Mammary epithelial cell (primary cell): ENCODE measurements at regions of chr17 and their contacts with region 1.

Region 1: DNA sequence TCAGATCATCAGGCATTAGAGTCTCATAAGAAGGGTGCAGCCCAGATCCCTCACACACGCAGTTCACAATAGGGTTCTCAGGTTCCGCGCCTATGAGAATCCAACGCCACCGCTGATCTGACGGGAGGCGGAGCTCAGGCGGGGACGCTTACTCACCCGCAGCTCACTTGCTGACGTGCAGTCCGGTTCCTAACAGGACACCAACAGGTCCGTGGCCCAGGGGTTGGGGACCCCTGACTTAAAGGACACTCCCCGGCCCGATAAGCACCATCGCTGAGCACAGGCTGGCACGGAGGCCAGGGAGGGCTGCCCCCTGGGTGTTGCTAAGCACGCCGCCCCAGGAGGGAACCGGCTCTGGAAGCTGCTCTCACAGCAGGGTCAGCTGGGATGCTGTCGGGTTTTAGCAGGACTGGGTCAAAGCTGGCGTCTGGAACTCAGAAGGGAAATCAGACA is 30.1 kb upstream of the BAHCC1 start:
- DNase-seq: peak; percentile 82
- H3K4me3 ChIP-seq: peak overlapping the region in 2 of 3 experiments; percentile 13 to 14
- H3K27ac ChIP-seq: peak overlapping the region; percentile 48
- H3K4me1 ChIP-seq: peaks cover 25% of the 10 kb centered on the region
- H3K27me3 ChIP-seq: peaks cover 5% of the 10 kb centered on the region
- CTCF ChIP-seq: no peak

Region 2: DNA sequence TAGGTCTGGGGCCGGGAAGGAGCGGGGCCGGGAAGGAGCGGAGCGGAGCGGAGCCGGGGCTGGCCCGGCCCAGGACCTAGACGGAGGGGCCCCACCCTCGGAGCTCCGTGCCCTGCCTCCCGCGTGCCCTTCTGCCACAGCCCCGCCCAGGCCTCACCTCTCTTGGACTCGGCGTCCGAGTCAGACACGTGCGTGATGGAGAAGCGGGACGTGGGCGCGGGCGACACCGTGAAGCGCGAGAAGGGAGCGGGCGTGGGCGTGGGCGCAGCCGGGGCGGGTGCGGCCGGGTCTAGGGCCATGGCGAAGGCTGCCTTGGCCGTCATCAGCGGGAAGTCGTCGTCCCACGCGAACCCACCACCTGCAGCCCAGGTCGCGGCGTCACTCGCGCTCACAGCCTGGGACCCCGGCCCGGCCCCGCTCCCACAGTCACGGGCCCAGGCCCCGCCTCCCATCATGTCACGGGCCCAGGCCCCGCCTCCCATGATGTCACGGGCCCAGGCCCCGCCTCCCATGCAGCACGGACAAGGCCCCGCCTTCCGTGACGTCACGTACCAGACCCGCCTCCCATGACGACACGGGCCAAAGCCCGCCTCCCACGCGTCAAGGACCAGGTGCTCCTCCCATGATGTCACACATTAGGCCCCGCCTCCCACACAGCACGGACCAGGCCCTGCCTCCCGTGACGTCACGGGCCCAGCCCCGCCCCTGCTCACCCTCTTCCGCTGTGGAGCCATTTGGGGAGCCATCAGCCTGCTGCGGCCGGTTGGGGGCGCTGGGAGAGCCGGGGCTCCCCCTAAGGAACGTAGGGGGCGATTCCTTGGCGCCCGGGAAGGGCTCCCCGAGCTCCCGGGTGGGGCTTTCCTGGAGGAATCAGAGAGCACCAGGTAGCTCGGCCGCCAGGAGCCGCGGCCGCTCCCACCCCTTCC is 245.7 kb before region 1 on chr17:
- CTCF ChIA-PET with region 1: no interaction called
- dilution Hi-C with region 1: no loop called
- in situ Hi-C with region 1: no loop called
- intact Hi-C with region 1: no loop called
- DNase-seq: peak; percentile 66
- H3K4me3 ChIP-seq: peak overlapping the region; percentile 41 to 72 (median 69)
- H3K27ac ChIP-seq: peak overlapping the region; percentile 23
- H3K4me1 ChIP-seq: peaks cover 16% of the 10 kb centered on the region
- H3K27me3 ChIP-seq: no peaks in the 10 kb centered on the region
- CTCF ChIP-seq: no peak

Region 3: DNA sequence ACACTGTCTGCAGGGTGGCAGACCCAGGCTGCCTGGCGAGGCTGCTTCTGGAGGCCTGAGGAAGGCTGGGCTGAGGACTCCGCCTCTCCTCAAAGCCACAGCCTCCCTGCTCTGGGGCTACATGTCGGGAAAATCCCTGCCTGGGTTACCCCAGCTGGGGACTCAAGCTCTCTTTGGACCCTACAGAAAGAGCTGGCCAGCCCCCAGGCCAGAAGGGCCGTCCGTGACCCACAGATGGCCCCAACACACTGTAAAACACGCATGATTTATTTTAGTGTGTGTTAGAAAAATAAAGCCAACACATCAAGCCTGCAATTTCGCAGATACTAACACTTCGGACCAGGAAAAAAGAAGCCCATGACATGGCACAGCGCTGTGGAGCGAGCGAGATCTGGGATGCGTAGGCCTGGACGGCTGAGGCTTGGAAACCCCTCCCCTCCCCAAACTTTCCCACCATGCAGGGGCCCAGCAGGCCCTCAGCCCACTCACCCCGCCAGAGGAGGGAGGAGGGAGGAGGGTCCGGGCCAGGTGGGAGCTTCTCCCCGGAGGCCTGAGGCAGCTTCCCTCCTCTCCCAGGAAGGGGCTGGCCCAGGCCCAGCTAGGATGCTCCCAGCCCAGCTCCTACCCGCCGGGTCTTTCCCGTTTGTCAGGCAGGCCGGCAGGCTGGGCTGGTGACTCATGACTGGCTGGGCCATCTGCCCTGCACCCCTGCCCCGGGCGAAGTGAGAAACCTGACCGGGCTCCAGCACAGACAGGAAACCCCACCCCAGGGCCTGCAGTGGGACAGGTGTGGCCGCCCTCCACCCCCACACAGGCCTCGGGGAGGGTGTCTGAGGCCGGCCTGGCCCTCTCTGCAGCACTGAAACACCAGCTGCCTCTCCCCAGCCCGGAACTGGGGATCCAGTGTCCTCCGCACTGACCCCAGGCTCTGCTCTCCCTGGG is 35.9 kb before region 1 on chr17:
- CTCF ChIA-PET with region 1: no interaction called
- dilution Hi-C with region 1: no loop called
- in situ Hi-C with region 1: no loop called
- intact Hi-C with region 1: loop called (anchors 1 kb)
- DNase-seq: peak; percentile 98
- H3K4me3 ChIP-seq: peak overlapping the region in 2 of 3 experiments; percentile 28 to 30
- H3K27ac ChIP-seq: peak overlapping the region; percentile 62
- H3K4me1 ChIP-seq: peaks cover 32% of the 10 kb centered on the region
- H3K27me3 ChIP-seq: no peaks in the 10 kb centered on the region
- CTCF ChIP-seq: no peak

Region 4: DNA sequence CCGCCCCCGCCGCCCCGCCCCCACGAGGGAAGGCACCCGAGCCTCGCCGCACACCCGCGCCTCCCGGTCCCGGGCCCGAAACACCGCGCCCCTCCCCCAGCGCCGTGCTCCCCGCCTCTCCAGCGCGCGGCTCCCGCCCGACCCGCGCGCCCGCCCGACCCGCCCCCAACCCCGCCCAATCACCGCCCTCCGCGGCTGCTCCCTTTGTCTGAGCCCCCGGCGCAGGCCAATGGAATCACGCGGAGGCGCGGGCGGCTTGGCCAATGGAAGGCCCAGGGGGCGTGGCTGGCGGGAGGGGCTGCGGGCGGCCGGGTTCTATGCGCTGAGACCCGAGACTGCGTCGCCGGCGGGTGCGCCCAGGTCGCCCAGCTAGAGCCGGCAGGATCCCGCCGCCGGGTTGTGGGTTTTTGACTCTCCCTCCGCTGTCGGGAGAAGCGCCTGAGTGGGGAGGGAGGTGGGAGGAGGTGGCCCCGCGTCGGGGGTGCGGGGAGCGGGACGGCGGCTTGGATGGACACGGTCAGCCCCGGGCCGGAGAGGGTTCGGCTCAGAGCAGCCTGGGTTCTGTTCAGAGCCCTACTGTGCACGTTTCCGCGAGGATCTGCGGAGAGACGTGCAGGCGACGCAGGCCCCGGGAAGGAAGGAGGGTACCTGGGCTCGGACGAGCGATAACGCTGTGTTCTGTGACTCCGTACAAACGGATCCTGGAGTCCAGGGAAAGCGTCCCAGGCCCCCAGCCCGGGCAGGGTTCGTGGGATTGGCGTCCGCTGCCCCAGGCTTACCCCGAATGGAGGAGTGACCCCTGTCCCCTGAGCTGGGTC is 18.9 kb before region 1 on chr17:
- CTCF ChIA-PET with region 1: no interaction called
- dilution Hi-C with region 1: no loop called
- in situ Hi-C with region 1: no loop called
- intact Hi-C with region 1: loop called (anchors 1 kb)
- DNase-seq: peak; percentile 94
- H3K4me3 ChIP-seq: peak overlapping the region; percentile 55 to 88 (median 62)
- H3K27ac ChIP-seq: no peak overlapping the region
- H3K4me1 ChIP-seq: peaks cover 22% of the 10 kb centered on the region
- H3K27me3 ChIP-seq: no peaks in the 10 kb centered on the region
- CTCF ChIP-seq: no peak